AG04450 (cell line): ENCODE measurements at regions of chr6 and their contacts with region 1.

Region 1: GRCh38 chr6:169831450-169832246 is 80.2 kb downstream of the ERMARD start:
- DNase-seq: peak; percentile 3
- H3K4me3 ChIP-seq: no peak overlapping the region
- H3K27ac ChIP-seq: no peak overlapping the region
- H3K27me3 ChIP-seq: peaks cover 3% of the 10 kb centered on the region
- CTCF ChIP-seq: peak; percentile 91

Region 2: GRCh38 chr6:169800668-169801395 is 30.8 kb before region 1 on chr6:
- CTCF ChIA-PET with region 1: interaction called, 30 read pairs
- POLR2A ChIA-PET with region 1: interaction called, 3 read pairs
- DNase-seq: peak; percentile 45
- H3K4me3 ChIP-seq: no peak overlapping the region
- H3K27ac ChIP-seq: peak overlapping the region; percentile 39
- H3K27me3 ChIP-seq: peaks cover 8% of the 10 kb centered on the region
- CTCF ChIP-seq: no peak

Region 3: GRCh38 chr6:169816054-169816453 is 15.6 kb before region 1 on chr6:
- CTCF ChIA-PET with region 1: interaction called, 23 read pairs
- POLR2A ChIA-PET with region 1: no interaction called
- DNase-seq: no peak
- H3K4me3 ChIP-seq: no peak overlapping the region
- H3K27ac ChIP-seq: no peak overlapping the region
- H3K27me3 ChIP-seq: peaks cover 5% of the 10 kb centered on the region
- CTCF ChIP-seq: no peak

Region 4: DNA sequence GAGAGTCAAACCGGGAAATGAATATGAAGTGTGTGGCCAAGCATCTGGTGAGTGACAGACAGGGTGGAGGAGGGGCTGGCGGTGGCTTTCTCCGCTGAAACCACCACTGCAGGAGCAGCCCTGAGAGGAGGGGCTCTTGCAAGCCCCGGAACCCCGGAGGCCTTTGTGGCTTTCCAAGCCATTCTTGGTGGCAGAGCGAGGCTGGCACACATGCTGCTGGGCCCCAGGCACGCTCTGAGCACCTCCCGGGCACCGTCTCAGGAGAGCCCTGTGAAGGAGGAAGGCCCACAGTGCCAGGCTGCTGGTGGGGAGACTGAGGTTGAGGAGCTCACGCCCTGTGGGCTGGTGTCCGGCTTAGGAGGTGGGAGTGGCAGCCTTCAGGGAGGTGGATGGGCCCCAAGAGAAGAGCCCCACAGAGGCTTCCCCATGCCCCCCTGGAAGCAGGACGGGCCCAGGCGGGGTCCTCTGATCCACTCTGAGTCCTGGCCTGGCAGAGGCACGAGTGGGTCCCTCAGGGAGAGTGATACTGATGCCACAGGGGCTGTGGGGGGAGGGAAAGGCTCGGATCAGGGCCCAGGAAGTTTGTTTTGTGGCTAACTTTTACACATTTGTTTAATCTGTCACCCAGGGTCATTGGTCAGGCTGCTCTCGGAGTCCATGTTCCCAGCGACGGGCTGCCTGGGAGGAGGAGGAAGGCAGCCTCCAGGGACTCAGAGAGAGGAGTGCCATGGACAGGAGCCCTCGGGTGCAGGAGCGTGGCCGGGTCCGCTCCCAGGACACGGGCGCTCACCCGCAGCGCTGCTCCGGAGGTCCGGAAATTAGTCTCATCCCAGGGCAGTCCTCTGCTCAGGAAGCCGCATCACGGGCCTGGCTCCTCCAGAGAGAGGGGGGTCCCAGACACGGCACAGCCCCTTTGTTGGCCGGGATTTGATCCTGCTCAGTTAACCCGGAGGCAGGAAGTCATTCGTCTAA is 90.5 kb after region 1 on chr6:
- CTCF ChIA-PET with region 1: no interaction called
- POLR2A ChIA-PET with region 1: no interaction called
- DNase-seq: no peak
- H3K4me3 ChIP-seq: no peak overlapping the region
- H3K27ac ChIP-seq: no peak overlapping the region
- H3K27me3 ChIP-seq: no peaks in the 10 kb centered on the region
- CTCF ChIP-seq: no peak

Region 5: DNA sequence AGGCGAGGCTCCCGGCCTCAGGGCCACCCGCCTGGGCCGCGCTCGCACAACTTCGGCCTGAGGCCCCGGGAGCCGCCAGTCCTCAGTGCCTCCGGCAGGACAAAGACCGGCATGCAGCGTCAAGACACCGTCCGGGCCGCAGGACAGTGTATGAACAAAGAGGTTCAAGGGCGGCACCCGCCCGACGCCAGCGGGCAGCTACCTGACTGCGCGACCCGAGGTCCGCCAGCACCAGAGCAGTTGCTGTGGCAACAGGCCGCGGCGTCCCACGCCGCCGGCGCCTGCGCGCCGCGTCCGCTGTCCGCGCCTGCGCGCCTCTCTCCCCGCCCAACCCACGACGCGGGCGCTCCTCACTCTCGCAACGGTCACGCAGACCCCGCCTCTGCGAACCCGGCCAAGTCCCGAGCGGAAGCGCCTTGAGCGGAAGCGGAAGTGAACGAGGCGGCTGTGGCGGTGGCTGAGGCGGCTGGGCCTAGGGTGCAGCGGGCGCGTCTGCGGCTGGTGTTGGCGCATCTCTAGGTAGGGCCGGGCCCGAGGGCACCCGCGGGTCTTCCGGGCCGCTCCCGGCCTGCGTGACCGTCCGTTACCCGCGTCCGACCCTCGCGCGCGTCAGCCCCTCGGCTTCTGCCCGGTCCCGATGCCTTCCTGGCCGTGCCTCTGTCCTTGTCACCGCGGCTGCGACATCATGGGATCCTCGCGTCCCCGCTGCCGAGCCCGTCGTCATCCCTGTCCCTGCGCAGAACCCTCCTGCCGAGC is 474.9 kb after region 1 on chr6 and contains the start of gene FAM120B:
- CTCF ChIA-PET with region 1: interaction called, 10 read pairs
- POLR2A ChIA-PET with region 1: no interaction called
- DNase-seq: peak; percentile 85
- H3K4me3 ChIP-seq: peak within 1 kb of the TSS; percentile 100
- H3K27ac ChIP-seq: peak within 1 kb of the TSS; percentile 47
- H3K27me3 ChIP-seq: peaks cover 2% of the 10 kb centered on the region
- CTCF ChIP-seq: no peak
- polyA plus RNA-seq, gene FAM120B: 13.9 and 19.6 TPM in 2 replicates

Region 6: DNA sequence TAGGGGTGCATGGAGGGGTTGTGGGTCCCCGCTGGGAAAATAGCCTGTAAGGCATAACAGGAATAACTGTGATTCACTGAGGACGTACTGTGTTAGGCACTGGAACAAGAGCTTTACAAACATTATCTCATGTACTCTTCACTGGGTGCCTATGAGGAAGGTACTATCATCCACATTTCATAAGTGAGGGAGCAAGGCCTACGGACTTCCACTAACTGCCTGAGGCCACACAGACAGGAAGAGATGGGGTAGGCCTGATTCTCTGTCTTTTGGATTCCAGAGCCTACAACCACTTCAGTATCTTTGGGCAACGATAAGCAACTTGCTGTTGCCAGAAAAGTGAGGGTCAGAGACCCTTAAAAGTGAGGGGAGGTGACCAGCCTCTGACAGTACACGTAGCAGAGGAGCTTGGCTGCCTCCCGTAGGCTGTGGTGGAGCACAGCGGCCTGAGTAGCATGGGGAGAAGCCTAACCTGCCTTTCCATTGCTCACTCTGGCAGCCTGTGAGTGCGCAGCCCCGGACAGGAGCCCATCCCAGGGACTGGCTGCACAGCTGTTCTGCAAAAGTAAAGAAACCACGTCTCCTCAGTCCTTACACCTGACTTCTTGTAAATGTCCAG is 691.0 kb after region 1 on chr6:
- CTCF ChIA-PET with region 1: interaction called, 143 read pairs
- POLR2A ChIA-PET with region 1: no interaction called
- DNase-seq: no peak
- H3K4me3 ChIP-seq: no peak overlapping the region
- H3K27ac ChIP-seq: no peak overlapping the region
- H3K27me3 ChIP-seq: no peaks in the 10 kb centered on the region
- CTCF ChIP-seq: peak; percentile 30; the same call in 1 of the 2 replicates